GM12878 (cell line): ENCODE measurements at regions of chr2 and their contacts with region 1.

Region 1: GRCh38 chr2:70871398-70872211 is 36.0 kb upstream of the CD207 start:
- DNase-seq: no peak
- ATAC-seq: peak; percentile 100
- H3K4me3 ChIP-seq: no peak overlapping the region
- H3K27ac ChIP-seq: no peak overlapping the region
- H3K4me1 ChIP-seq: no peaks in the 10 kb centered on the region
- H3K27me3 ChIP-seq: peaks cover 0 to 3% of the 10 kb centered on the region in 2 experiments; a peak in 3 of 4 replicates
- CTCF ChIP-seq: peak; percentile 81 to 92 (median 87)
- EP300 ChIP-seq: no peak
- POLR2A ChIP-seq: no peak
- RAD21 ChIP-seq: peak; percentile 77

Region 2: DNA sequence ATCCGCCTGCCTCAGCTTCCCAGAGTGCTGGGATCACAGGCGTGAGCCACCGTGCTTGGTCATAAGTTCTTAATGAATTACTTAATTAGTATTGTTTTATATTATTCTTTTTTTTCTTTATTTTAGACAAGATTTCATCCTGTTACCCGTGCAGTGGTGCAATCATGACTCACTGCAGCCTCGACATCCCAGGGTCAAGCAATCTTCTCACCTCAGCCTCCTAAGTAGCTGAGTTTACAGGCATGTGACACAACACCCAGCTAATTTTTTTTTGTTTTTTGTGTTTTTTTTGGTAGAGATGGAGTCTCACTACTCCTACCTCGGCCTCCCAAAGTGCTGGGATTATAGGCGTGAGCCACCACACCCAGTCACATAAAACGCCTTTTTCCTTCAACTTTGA is 698.1 kb before region 1 on chr2:
- CTCF ChIA-PET with region 1: no interaction called
- POLR2A ChIA-PET with region 1: no interaction called
- RAD21 ChIA-PET with region 1: no interaction called
- SMC1A ChIA-PET with region 1: no interaction called
- in situ Hi-C with region 1: no loop called
- intact Hi-C with region 1: no loop called
- DNase-seq: no peak
- ATAC-seq: no peak
- H3K4me3 ChIP-seq: no peak overlapping the region
- H3K27ac ChIP-seq: no peak overlapping the region
- H3K4me1 ChIP-seq: no peaks in the 10 kb centered on the region; the same call in 1 of the 2 replicates
- H3K27me3 ChIP-seq: no peaks in the 10 kb centered on the region
- CTCF ChIP-seq: no peak
- EP300 ChIP-seq: no peak
- POLR2A ChIP-seq: no peak
- RAD21 ChIP-seq: no peak

Region 3: GRCh38 chr2:70795164-70795995 is 76.2 kb before region 1 on chr2:
- CTCF ChIA-PET with region 1: no interaction called
- POLR2A ChIA-PET with region 1: no interaction called
- RAD21 ChIA-PET with region 1: no interaction called
- SMC1A ChIA-PET with region 1: no interaction called
- in situ Hi-C with region 1: no loop called
- intact Hi-C with region 1: no loop called
- DNase-seq: no peak
- ATAC-seq: no peak
- H3K4me3 ChIP-seq: no peak overlapping the region
- H3K27ac ChIP-seq: no peak overlapping the region
- H3K4me1 ChIP-seq: no peaks in the 10 kb centered on the region
- H3K27me3 ChIP-seq: peaks cover 2 to 3% of the 10 kb centered on the region in 2 experiments; a peak in 1 of 4 replicates
- CTCF ChIP-seq: no peak
- EP300 ChIP-seq: no peak
- POLR2A ChIP-seq: no peak
- RAD21 ChIP-seq: no peak

Region 4: DNA sequence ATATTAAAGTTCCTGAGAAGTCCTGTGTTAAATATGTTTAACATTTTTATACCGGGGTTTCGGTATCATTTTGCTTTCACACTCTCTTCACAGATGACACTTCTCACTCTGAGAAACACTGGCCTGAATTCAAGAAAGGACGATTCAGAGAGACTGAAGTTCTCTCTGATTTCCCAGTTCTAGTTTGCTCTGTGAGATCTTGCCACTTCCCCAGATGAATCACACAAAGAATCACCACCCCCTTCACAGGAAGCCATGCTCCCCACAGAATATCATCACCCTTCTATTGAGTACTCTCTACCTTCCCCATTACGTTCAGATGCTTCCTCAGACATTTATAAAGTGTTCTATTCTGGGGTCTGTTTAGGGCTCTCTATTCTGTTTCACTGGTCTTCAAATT is 19.9 kb before region 1 on chr2:
- CTCF ChIA-PET with region 1: interaction called, 13 read pairs
- POLR2A ChIA-PET with region 1: no interaction called
- RAD21 ChIA-PET with region 1: no interaction called
- SMC1A ChIA-PET with region 1: interaction called, 3 read pairs
- in situ Hi-C with region 1: no loop called
- intact Hi-C with region 1: no loop called
- DNase-seq: peak; percentile 73
- ATAC-seq: peak; percentile 96
- H3K4me3 ChIP-seq: no peak overlapping the region
- H3K27ac ChIP-seq: peak overlapping the region; percentile 52; the same call in 1 of the 2 replicates
- H3K4me1 ChIP-seq: peaks cover 9% of the 10 kb centered on the region
- H3K27me3 ChIP-seq: no peaks in the 10 kb centered on the region
- CTCF ChIP-seq: no peak
- EP300 ChIP-seq: peak in 1 of 2 experiments; percentile 15; a peak in 1 of 4 replicates
- POLR2A ChIP-seq: no peak
- RAD21 ChIP-seq: no peak

Region 5: GRCh38 chr2:70897203-70897976 is 25.8 kb after region 1 on chr2:
- CTCF ChIA-PET with region 1: no interaction called
- POLR2A ChIA-PET with region 1: no interaction called
- RAD21 ChIA-PET with region 1: no interaction called
- SMC1A ChIA-PET with region 1: no interaction called
- in situ Hi-C with region 1: no loop called
- intact Hi-C with region 1: no loop called
- DNase-seq: no peak
- ATAC-seq: no peak
- H3K4me3 ChIP-seq: no peak overlapping the region
- H3K27ac ChIP-seq: no peak overlapping the region
- H3K4me1 ChIP-seq: no peaks in the 10 kb centered on the region
- H3K27me3 ChIP-seq: peaks cover 35 to 41% of the 10 kb centered on the region in 2 experiments
- CTCF ChIP-seq: no peak
- EP300 ChIP-seq: no peak
- POLR2A ChIP-seq: no peak
- RAD21 ChIP-seq: no peak

Region 6: GRCh38 chr2:70907130-70908057 is 35.8 kb after region 1 on chr2:
- CTCF ChIA-PET with region 1: interaction called, 6 read pairs
- POLR2A ChIA-PET with region 1: no interaction called
- RAD21 ChIA-PET with region 1: no interaction called
- SMC1A ChIA-PET with region 1: no interaction called
- in situ Hi-C with region 1: no loop called
- intact Hi-C with region 1: loop called (anchors 1 kb)
- DNase-seq: no peak
- ATAC-seq: no peak
- H3K4me3 ChIP-seq: no peak overlapping the region
- H3K27ac ChIP-seq: no peak overlapping the region
- H3K4me1 ChIP-seq: no peaks in the 10 kb centered on the region
- H3K27me3 ChIP-seq: peaks cover 13 to 42% of the 10 kb centered on the region in 2 experiments
- CTCF ChIP-seq: no peak
- EP300 ChIP-seq: no peak
- POLR2A ChIP-seq: no peak
- RAD21 ChIP-seq: no peak

Region 7: GRCh38 chr2:70919672-70920366 is 48.2 kb after region 1 on chr2:
- CTCF ChIA-PET with region 1: interaction called, 39 read pairs
- POLR2A ChIA-PET with region 1: interaction called, 4 read pairs
- RAD21 ChIA-PET with region 1: interaction called, 8 read pairs
- SMC1A ChIA-PET with region 1: interaction called, 4 read pairs
- in situ Hi-C with region 1: loop called (anchors 5 kb)
- intact Hi-C with region 1: loop called (anchors 2 kb)
- DNase-seq: no peak
- ATAC-seq: peak; percentile 92
- H3K4me3 ChIP-seq: no peak overlapping the region
- H3K27ac ChIP-seq: no peak overlapping the region
- H3K4me1 ChIP-seq: no peaks in the 10 kb centered on the region
- H3K27me3 ChIP-seq: peaks cover 0 to 3% of the 10 kb centered on the region in 2 experiments; a peak in 2 of 4 replicates
- CTCF ChIP-seq: peak; percentile 85 to 90 (median 88)
- EP300 ChIP-seq: no peak
- POLR2A ChIP-seq: no peak
- RAD21 ChIP-seq: peak; percentile 71

Region 8: DNA sequence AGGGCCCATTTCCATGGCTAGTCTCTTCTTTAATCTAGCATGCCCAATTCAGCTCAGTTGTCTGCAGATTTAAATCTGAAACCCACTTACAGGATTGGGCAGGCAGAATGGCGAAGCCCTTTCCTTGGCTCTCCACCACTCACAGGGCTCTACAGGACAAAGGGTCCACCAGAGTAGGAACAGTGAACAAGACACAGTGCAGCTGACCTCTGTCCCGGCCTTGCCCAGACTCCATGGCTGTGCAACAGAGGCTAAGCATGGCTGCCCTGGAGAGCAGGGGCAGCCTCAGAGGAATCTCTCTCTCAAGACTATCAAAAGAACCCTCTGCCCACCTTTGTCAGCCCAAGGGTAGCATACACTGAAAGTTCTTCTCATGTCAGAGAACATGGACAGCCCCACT is 54.4 kb after region 1 on chr2:
- CTCF ChIA-PET with region 1: interaction called, 39 read pairs
- POLR2A ChIA-PET with region 1: no interaction called
- RAD21 ChIA-PET with region 1: interaction called, 8 read pairs
- SMC1A ChIA-PET with region 1: interaction called, 4 read pairs
- in situ Hi-C with region 1: no loop called
- intact Hi-C with region 1: loop called (anchors 2 kb)
- DNase-seq: no peak
- ATAC-seq: no peak
- H3K4me3 ChIP-seq: no peak overlapping the region
- H3K27ac ChIP-seq: no peak overlapping the region
- H3K4me1 ChIP-seq: no peaks in the 10 kb centered on the region
- H3K27me3 ChIP-seq: peaks cover 0 to 4% of the 10 kb centered on the region in 2 experiments; a peak in 2 of 4 replicates
- CTCF ChIP-seq: no peak
- EP300 ChIP-seq: no peak
- POLR2A ChIP-seq: no peak
- RAD21 ChIP-seq: no peak

Region 9: GRCh38 chr2:71049365-71050360 is 178.1 kb after region 1 on chr2:
- CTCF ChIA-PET with region 1: no interaction called
- POLR2A ChIA-PET with region 1: no interaction called
- RAD21 ChIA-PET with region 1: no interaction called
- SMC1A ChIA-PET with region 1: no interaction called
- in situ Hi-C with region 1: no loop called
- intact Hi-C with region 1: no loop called
- DNase-seq: no peak
- ATAC-seq: peak; percentile 90
- H3K4me3 ChIP-seq: no peak overlapping the region
- H3K27ac ChIP-seq: no peak overlapping the region
- H3K4me1 ChIP-seq: peaks cover 4% of the 10 kb centered on the region; the same call in 1 of the 2 replicates
- H3K27me3 ChIP-seq: no peaks in the 10 kb centered on the region
- CTCF ChIP-seq: peak; percentile 32 to 55 (median 35); a peak in 5 of 6 replicates
- EP300 ChIP-seq: no peak
- POLR2A ChIP-seq: no peak
- RAD21 ChIP-seq: peak; percentile 73